SK-N-SH (cell line): ENCODE measurements at regions of chr4 and their contacts with region 1.

Region 1: DNA sequence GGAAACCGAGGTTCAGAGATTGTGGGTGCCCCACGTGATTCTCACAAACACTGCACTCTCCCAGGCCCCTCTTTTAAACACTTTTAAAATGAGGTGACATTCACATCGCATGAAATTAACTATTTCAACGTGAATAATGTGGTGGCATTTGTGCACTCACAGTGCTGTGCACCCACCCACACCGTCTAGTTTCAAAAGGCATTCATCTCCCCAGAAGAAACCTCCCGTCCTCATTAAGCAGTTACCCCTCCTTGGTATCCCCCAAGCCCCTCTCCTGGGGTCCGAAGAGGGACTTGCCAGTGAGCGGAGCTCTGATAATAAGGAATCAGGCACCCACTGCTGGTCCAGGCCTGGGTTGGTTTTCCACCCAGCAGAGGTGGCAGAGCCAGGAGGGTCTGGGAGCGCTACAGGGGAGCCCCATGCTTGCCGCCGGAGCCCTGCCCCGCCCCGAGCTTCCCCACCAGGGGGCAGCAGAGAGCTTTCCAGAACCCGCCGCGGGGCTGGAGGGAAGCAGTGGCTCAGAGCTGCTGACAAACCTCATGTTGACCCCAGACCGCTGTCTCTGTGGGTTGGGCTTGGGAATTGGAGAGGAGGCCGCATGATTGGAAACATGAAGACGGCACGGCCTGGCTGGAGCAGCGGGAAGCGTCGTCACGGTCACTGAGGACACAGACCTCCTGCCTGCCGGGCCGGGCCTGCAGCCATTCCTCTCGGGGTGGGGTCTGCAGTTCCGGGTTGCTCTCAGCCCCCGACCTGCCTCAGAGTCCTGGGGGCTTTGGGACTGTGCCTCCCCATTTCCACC is 27.5 kb upstream of the HTRA3 start:
- DNase-seq: peak; percentile 98
- H3K4me3 ChIP-seq: peak overlapping the region in 1 of 2 experiments; percentile 44; a peak in 1 of 4 replicates
- H3K27ac ChIP-seq: peak overlapping the region in 1 of 2 experiments; percentile 73; a peak in 1 of 4 replicates
- H3K4me1 ChIP-seq: peaks cover 4 to 8% of the 10 kb centered on the region in 2 experiments; a peak in 1 of 4 replicates
- H3K27me3 ChIP-seq: no peaks in the 10 kb centered on the region
- CTCF ChIP-seq: peak; percentile 93
- EP300 ChIP-seq: no peak
- RAD21 ChIP-seq: peak; percentile 94

Region 2: DNA sequence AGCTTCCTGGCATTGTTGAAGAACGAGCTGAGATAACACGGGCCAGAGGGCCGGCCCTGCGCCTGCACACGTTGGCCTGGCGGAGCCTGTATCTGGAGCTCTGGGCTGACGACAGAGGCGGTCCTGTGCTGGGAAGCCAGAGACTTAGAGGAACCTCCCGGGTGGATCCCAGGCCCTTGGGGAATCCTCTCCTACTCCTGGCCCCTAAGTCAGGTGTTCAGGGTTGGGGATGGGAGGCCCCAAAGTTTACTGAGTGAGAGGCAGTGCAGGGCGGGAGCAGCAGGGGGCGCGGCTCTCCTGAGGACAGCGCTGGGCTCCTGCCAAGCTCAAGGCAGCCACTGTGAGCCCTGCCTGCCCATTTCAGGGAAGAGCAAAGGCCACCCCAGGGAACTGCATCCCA is 25.0 kb after region 1 on chr4:
- CTCF ChIA-PET with region 1: interaction called, 26 read pairs
- POLR2A ChIA-PET with region 1: no interaction called
- DNase-seq: peak; percentile 73
- H3K4me3 ChIP-seq: no peak overlapping the region
- H3K27ac ChIP-seq: peak overlapping the region in 1 of 2 experiments; percentile 16; a peak in 1 of 4 replicates
- H3K4me1 ChIP-seq: peaks cover 0 to 29% of the 10 kb centered on the region in 2 experiments; a peak in 1 of 4 replicates
- H3K27me3 ChIP-seq: no peaks in the 10 kb centered on the region
- CTCF ChIP-seq: peak; percentile 46
- EP300 ChIP-seq: no peak
- RAD21 ChIP-seq: peak; percentile 40

Region 3: DNA sequence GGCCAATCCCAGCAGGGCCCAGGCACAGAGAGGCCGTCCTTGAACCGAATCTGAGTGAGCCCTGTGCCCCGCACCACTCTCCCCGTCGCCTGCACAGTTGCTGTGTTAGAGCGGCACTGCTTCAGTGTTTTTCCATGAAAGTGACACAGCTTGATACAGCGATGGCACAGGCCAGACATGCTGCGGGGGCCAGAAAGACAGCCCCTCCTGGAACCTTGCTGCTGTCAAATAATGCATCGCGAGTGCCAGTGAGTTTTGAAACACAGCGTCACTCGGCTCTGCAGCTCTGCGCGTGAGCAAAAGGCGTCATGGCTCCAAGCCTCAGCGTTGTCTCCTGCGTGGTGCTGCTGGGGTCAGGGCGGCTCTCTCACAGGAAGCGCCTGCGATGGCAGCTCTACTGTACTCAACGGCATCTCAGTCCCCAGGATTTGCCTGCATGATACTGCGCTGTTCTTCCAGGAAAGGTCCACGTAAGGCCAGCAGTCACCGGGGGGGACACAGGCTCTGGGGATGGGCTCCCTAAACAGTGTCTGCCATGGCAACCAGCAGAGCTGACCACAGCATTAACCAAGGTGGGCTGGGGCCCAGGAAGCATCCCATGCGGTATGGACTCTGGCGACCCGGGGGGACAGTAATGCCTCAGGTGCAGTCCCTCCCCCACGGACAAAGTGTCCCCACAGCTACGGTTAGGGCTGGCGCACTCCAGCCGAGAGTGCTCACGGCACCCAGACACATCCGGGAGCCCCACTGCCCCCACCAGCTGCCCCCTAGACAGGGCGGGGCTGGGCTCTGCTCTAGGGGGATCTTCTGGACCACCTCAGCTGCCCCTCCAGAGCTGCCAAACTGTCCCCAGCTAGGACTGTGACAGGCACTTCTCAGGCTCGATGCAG is 135.3 kb after region 1 on chr4:
- CTCF ChIA-PET with region 1: interaction called, 11 read pairs
- POLR2A ChIA-PET with region 1: no interaction called
- DNase-seq: no peak
- H3K4me3 ChIP-seq: no peak overlapping the region
- H3K27ac ChIP-seq: no peak overlapping the region
- H3K4me1 ChIP-seq: peaks cover 0 to 14% of the 10 kb centered on the region in 2 experiments; a peak in 1 of 4 replicates
- H3K27me3 ChIP-seq: no peaks in the 10 kb centered on the region
- CTCF ChIP-seq: no peak
- EP300 ChIP-seq: no peak
- RAD21 ChIP-seq: no peak

Region 4: GRCh38 chr4:8410641-8411271 is 168.7 kb after region 1 on chr4:
- CTCF ChIA-PET with region 1: interaction called, 115 read pairs
- POLR2A ChIA-PET with region 1: no interaction called
- DNase-seq: peak; percentile 88
- H3K4me3 ChIP-seq: no peak overlapping the region; a peak in 1 of 4 replicates
- H3K27ac ChIP-seq: no peak overlapping the region; a peak in 1 of 4 replicates
- H3K4me1 ChIP-seq: peaks cover 0 to 4% of the 10 kb centered on the region in 2 experiments; a peak in 1 of 4 replicates
- H3K27me3 ChIP-seq: no peaks in the 10 kb centered on the region
- CTCF ChIP-seq: peak; percentile 47
- EP300 ChIP-seq: no peak
- RAD21 ChIP-seq: peak; percentile 78